Panc1 (cell line): ENCODE measurements at regions of chr2 and their contacts with region 1.

Region 1: DNA sequence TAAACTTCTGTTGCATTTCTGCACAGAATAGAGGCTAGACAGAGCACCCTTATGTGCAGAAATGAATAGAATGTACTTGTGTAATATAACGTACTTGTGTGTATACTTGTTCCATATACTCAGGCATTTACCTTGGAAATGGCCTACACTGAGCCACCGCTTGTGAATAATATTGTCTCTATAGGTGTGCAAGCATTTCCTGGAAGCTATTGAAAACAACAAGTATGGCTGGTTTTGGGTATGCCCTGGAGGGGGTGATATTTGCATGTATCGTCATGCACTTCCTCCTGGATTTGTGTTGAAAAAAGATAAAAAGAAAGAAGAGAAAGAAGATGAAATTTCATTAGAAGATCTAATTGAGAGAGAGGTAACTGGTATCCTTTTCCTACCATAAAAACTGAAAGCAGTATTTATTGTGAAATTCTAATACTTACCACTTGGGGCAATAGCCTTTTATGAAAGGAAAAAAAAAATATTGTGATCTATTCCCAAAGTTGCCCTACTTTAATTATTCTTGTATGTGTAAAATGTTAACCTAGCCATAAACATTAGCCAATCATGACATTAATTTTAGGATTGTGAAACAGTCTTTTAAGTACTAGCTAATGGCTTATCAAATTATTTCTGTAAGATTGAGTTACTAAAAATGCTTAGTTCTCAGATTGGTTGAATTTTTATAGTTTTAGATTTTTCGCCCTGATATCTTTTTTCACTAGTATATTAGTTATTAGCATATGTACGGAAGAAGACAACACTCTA is 18.0 kb downstream of the ZC3H15 start:
- DNase-seq: no peak
- ATAC-seq: peak; percentile 76
- H3K4me3 ChIP-seq: no peak overlapping the region
- H3K27ac ChIP-seq: no peak overlapping the region; the same call in 1 of the 2 replicates
- H3K4me1 ChIP-seq: peaks cover 5% of the 10 kb centered on the region
- H3K27me3 ChIP-seq: no peaks in the 10 kb centered on the region
- CTCF ChIP-seq: peak; percentile 63; the same call in 1 of the 2 replicates

Region 2: DNA sequence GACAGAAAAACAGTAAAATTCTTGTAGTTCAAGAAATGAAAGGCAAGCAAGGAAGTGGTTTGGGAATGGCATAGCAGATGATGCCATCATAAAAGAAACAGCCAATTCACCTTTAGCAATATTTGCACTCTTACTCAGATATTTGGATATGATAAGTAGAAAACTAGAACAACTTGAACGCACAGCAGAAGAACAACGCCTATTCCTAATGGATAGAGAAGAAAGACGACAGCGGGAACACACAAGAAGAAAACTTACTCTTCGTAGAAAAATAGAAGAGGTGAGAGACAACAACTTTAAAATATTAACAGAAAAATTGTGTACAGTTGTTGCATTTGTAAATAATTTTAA is 757.5 kb before region 1 on chr2:
- CTCF ChIA-PET with region 1: no interaction called
- POLR2A ChIA-PET with region 1: no interaction called
- in situ Hi-C with region 1: no loop called
- intact Hi-C with region 1: no loop called
- DNase-seq: no peak
- ATAC-seq: no peak
- H3K4me3 ChIP-seq: no peak overlapping the region
- H3K27ac ChIP-seq: no peak overlapping the region
- H3K4me1 ChIP-seq: no peaks in the 10 kb centered on the region
- H3K27me3 ChIP-seq: no peaks in the 10 kb centered on the region
- CTCF ChIP-seq: no peak

Region 3: GRCh38 chr2:186641807-186642321 is 137.8 kb after region 1 on chr2:
- CTCF ChIA-PET with region 1: interaction called, 15 read pairs
- POLR2A ChIA-PET with region 1: no interaction called
- in situ Hi-C with region 1: no loop called
- intact Hi-C with region 1: loop called (anchors 1 kb)
- DNase-seq: peak; percentile 71
- ATAC-seq: peak; percentile 91
- H3K4me3 ChIP-seq: no peak overlapping the region
- H3K27ac ChIP-seq: no peak overlapping the region
- H3K4me1 ChIP-seq: peaks cover 4% of the 10 kb centered on the region
- H3K27me3 ChIP-seq: no peaks in the 10 kb centered on the region
- CTCF ChIP-seq: peak; percentile 76